Psoas muscle (tissue), 8 donors: ENCODE measurements at regions of chr10 and their contacts with region 1.

Region 1: DNA sequence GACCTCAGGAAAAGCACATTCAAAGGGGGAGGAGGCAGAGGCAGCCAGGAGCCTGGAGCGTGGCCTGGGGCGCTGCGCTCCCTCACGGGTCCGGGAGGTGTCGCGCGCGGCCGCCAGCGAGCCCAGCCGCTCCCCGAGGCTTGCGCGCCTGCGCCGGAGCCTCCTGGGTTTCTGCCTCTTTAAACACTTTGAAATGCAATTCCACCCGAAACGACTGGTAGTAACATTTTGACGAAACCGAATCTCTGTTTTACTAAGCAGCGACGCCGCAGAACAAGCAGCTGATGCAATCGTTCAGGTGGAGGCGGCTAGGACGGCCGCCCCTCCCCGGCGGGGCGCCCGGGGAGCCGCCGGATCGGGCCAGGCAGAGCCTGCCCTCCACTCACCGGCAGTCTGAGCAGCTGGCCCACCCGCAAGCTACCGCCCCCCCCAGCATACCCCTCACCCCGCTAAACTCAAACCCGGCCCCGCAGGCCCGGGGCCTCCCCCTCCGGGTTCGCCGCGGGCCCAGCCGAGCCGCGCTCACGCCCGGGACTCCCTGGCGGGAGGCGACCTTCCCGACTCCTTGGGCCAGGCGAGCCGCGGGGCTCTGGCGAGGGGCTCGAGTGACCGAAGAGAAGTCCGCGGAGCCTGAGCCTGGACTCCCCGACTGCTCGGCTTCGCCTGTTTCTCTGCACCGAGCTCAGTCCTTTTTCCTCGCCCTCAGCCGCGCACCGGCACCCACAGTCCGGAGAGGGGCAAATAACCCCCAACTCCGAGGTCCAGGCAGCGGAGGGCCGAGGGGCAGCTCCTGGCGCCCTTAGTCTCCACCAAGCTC is 3.2 kb downstream of the MKX start:
- DNase-seq: peak; percentile 85 to 86
- ATAC-seq: peak; percentile 87 to 92 (median 90)
- H3K4me3 ChIP-seq: peak overlapping the region; percentile 75
- H3K27ac ChIP-seq: peak overlapping the region; percentile 37
- H3K4me1 ChIP-seq: peaks cover 22% of the 10 kb centered on the region
- H3K27me3 ChIP-seq: peaks cover 0 to 59% (median 34%) of the 10 kb centered on the region in 3 donors
- CTCF ChIP-seq: peak; percentile 77

Region 2: DNA sequence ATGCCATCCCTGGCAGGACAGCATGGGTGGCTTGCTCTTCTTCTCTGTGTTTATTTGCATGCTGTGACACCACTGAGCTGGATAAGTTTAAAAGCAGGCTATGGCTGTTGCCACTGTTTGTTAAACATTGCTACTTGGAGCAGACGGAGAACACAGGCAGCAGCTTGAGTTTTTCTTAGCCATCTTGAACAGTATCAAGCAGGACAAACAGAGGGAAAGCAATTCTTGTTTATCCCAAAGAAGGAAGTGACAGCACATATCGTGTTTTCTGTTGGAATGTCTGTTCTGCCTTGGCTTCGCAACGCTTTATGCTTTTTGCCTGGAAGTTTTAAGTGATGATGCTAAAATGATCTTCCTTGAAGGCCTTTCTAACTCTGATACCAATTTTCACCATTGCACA is 70.6 kb before region 1 on chr10:
- intact Hi-C with region 1: no loop called
- DNase-seq: no peak
- ATAC-seq: no peak
- H3K4me3 ChIP-seq: no peak overlapping the region
- H3K27ac ChIP-seq: no peak overlapping the region
- H3K4me1 ChIP-seq: no peaks in the 10 kb centered on the region
- H3K27me3 ChIP-seq: no peaks in the 10 kb centered on the region
- CTCF ChIP-seq: no peak

Region 3: GRCh38 chr10:28171468-28172222 is 429.2 kb after region 1 on chr10:
- intact Hi-C with region 1: loop called in 1 of 2 experiments (anchors 5 kb)
- DNase-seq: no peak
- ATAC-seq: peak; percentile 67 to 97 (median 83)
- H3K4me3 ChIP-seq: no peak overlapping the region
- H3K27ac ChIP-seq: no peak overlapping the region
- H3K4me1 ChIP-seq: peaks cover 10% of the 10 kb centered on the region
- H3K27me3 ChIP-seq: no peaks in the 10 kb centered on the region
- CTCF ChIP-seq: no peak